Activated CD4-positive, alpha-beta T cell treated with anti-CD3 and anti-CD28 coated beads, Interleukin-2, amount 10 ng/mL, durations not matched to agents 24 days and 14 days (primary cell): ENCODE measurements at regions of chr19 and their contacts with region 1.

Region 1: GRCh38 chr19:37466798-37467607 is at the start of gene ZNF569:
- DNase-seq: peak; percentile 96
- H3K4me3 Mint-ChIP-seq: peak within 1 kb of the TSS; percentile 90
- H3K27ac Mint-ChIP-seq: peak within 1 kb of the TSS; percentile 93
- H3K4me1 Mint-ChIP-seq: peaks cover 19% of the 10 kb centered on the region
- H3K27me3 Mint-ChIP-seq: no peaks in the 10 kb centered on the region
- total RNA-seq, gene ZNF569: 3.4 and 3.5 TPM in 2 replicates

Region 2: DNA sequence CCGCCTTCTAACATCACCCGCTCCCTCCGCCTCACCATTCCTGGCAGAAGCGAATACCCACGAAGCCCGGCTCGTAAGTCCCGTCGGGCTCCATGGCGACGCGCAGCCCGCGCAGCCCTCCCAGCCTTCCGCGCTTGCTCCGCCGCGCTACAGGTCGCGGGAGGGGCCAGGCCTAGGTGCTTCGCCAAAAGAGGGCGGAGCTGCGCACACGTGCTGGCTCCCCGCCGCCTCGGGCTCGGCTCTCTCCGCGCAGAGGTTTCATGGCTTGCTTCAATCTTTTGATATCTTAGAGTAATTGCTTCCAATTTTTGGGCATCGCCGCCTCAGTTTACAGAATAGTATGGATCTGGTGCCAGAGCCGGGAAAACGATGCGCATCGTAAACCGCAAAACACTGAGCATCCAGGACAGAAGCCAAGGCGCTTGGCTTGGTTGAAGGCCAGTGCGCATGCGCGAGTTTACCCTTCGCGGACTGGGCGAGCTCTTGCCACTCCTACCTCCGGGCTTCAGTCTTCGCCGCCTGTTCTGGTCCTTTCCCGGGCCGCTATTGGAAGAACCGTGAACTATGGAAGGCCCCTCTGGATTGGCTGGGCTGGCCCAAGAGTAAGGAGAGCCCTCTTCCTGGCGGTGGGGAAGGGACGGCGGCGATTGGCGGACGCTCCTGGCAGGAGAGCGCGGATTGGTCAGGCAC is 1352.1 kb before region 1 on chr19 and contains the start of gene POLR2I:
- intact Hi-C with region 1: loop called (anchors 10 kb)
- DNase-seq: peak; percentile 99
- H3K4me3 Mint-ChIP-seq: peak within 1 kb of the TSS; percentile 94
- H3K27ac Mint-ChIP-seq: peak within 1 kb of the TSS; percentile 95
- H3K4me1 Mint-ChIP-seq: peaks cover 29% of the 10 kb centered on the region
- H3K27me3 Mint-ChIP-seq: peaks cover 4% of the 10 kb centered on the region
- total RNA-seq, gene POLR2I: 83.4 and 86.3 TPM in 2 replicates

Region 3: GRCh38 chr19:36772311-36773222 is 694.4 kb before region 1 on chr19 and contains the start of gene ZNF850:
- intact Hi-C with region 1: loop called (anchors 5 kb)
- DNase-seq: peak; percentile 98
- H3K4me3 Mint-ChIP-seq: peak within 1 kb of the TSS; percentile 95
- H3K27ac Mint-ChIP-seq: peak within 1 kb of the TSS; percentile 89
- H3K4me1 Mint-ChIP-seq: peaks cover 21% of the 10 kb centered on the region
- H3K27me3 Mint-ChIP-seq: no peaks in the 10 kb centered on the region
- total RNA-seq, gene ZNF850: 3.2 and 3.8 TPM in 2 replicates

Region 4: GRCh38 chr19:37077934-37078725 is 388.9 kb before region 1 on chr19 and contains the start of gene ZNF420:
- intact Hi-C with region 1: loop called (anchors 5 kb)
- DNase-seq: peak; percentile 96
- H3K4me3 Mint-ChIP-seq: peak within 1 kb of the TSS; percentile 91
- H3K27ac Mint-ChIP-seq: peak within 1 kb of the TSS; percentile 92
- H3K4me1 Mint-ChIP-seq: peaks cover 17% of the 10 kb centered on the region
- H3K27me3 Mint-ChIP-seq: no peaks in the 10 kb centered on the region
- total RNA-seq, gene ZNF420: 9.8 and 11.9 TPM in 2 replicates

Region 5: GRCh38 chr19:37313335-37313627 is 153.7 kb before region 1 on chr19:
- intact Hi-C with region 1: loop called (anchors 1 kb)
- DNase-seq: no peak
- H3K4me3 Mint-ChIP-seq: peak overlapping the region; percentile 71
- H3K27ac Mint-ChIP-seq: no peak overlapping the region
- H3K4me1 Mint-ChIP-seq: peaks cover 12% of the 10 kb centered on the region
- H3K27me3 Mint-ChIP-seq: no peaks in the 10 kb centered on the region

Region 6: DNA sequence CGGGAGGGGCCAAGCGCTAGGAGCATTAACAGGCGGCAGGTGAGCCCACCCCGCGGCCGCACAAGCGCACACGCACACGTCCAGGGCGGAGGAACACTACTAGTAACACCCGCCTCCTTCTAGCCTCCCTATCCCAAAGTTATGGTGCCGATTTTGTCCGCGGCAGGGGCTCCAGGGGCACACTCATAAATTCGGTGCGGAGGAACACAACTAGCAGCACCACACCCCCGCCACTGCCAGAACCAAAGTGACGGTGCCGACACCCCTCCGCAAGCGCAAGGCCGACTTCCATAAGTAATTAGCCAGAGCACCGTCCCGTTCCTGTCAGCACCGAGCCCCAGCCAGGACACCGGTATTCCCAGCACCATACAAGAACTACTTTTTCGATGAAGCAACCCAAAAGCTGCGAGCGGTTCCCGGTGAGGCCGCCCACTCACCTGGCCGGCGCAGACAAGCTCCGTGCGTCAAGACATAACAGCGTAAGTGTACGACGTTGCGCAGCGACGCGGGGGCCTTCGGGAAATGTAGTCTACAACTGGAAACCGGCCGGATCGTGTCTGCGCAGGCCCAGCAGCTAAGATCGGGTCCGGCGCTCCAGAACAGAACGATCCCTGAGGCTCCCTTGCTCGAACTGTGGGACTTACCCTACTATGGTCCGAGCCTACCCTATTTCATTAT is 127.4 kb after region 1 on chr19 and contains the starts of genes ZNF540 and ZNF571:
- intact Hi-C with region 1: loop called (anchors 1 kb)
- DNase-seq: peak; percentile 96
- H3K4me3 Mint-ChIP-seq: peak within 1 kb of the TSS; percentile 98
- H3K27ac Mint-ChIP-seq: peak within 1 kb of the TSS; percentile 97
- H3K4me1 Mint-ChIP-seq: peaks cover 21% of the 10 kb centered on the region
- H3K27me3 Mint-ChIP-seq: no peaks in the 10 kb centered on the region
- total RNA-seq, gene ZNF540: 0.38 and 0.49 TPM in 2 replicates
- total RNA-seq, gene ZNF571: 0.47 and 1.1 TPM in 2 replicates

Region 7: DNA sequence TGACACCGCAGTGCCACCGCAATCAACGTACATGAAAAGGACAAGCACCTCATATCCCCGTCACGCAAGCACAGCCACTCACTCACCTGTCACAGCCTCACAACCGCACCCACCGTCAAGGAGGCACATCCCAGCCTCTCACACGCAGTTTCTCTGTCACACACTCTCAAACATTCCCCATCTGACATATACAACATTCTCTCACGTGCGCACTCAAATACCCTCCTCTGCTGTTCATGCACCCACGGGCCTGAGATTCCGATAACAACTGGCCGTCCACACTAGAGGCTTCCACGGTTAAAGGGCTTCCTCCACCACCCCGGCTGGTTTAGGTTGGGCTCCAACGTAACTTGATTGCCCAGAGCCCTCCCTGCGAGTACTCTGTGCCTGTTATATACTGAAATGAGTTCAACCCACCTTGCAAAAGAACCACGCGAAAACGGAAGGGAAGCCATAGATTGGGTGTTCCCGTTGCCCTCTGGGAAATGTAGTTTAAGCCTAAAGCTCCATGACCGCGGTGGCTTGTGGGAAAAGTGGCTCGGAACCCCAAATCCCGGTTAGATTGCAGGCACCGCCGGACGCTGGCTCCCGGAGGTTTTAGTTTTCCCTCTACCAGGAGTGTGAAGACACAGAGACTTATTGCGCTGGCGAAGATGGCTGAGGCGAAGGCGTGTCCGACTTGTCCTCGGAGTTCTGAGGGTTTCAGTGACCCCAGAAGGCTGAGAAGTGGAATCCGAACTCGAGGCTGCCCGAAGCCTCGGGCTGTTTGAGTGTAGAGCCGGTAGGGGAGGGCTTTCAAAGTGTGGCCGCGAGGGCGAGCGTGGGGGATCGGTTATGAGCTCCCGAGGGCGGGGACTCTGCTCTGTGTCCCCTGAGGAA is 312.4 kb after region 1 on chr19 and contains the start of gene ZNF573:
- intact Hi-C with region 1: loop called (anchors 2 kb)
- DNase-seq: peak; percentile 93
- H3K4me3 Mint-ChIP-seq: peak within 1 kb of the TSS; percentile 96
- H3K27ac Mint-ChIP-seq: peak within 1 kb of the TSS; percentile 92
- H3K4me1 Mint-ChIP-seq: peaks cover 11% of the 10 kb centered on the region
- H3K27me3 Mint-ChIP-seq: no peaks in the 10 kb centered on the region
- total RNA-seq, gene ZNF573: 6.5 and 6.8 TPM in 2 replicates